ENCODE measurements at regions of chr2 and their contacts with region 1.

Region 1: GRCh38 chr2:197113275-197113711 is 186.8 kb upstream of the PGAP1 start:
- DNase-seq: no peak
- H3K4me3 ChIP-seq: no peak overlapping the region
- CTCF ChIP-seq: no peak

Region 2: DNA sequence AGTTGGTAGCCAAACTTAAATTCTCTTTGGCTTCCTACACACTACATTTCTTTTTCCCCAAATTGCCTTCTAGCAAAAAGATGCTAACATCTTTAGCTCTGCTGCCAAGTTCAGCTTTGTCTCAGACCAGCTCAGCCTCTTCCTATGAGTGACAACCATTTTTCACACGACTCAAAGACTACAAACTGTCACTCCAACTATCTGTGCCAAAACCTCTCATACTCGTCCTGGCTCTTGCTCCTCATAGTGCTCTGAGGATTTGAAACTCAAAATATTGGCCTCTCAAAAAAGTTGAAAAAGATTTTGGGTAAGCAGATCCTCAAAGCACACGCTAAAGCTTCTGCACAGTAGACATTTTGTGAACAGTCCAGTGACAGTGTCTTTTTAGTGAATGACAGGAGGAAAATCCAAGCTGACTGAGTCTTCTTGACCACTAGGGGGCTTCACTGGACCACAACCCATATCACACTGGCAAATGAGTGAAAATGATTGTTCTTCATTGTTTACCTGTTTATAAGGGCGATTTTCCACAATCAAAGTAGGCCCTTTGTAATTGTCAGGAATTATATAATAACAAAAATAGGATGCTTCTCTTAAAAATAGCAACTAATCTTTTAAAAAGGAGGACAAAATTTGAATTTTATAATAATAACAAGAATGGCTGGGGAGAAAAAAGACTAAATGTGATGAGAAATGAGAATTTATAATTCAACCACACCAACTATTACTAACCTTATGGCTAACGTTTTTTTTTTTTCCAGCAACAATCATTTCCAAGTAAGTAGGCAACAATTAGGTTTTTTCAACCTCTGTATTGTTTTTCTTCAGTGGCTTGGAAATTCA is 101.3 kb before region 1 on chr2:
- CTCF ChIA-PET with region 1: interaction called, 16 read pairs
- POLR2A ChIA-PET with region 1: no interaction called
- DNase-seq: no peak
- H3K4me3 ChIP-seq: no peak overlapping the region
- CTCF ChIP-seq: peak; percentile 80

Region 3: DNA sequence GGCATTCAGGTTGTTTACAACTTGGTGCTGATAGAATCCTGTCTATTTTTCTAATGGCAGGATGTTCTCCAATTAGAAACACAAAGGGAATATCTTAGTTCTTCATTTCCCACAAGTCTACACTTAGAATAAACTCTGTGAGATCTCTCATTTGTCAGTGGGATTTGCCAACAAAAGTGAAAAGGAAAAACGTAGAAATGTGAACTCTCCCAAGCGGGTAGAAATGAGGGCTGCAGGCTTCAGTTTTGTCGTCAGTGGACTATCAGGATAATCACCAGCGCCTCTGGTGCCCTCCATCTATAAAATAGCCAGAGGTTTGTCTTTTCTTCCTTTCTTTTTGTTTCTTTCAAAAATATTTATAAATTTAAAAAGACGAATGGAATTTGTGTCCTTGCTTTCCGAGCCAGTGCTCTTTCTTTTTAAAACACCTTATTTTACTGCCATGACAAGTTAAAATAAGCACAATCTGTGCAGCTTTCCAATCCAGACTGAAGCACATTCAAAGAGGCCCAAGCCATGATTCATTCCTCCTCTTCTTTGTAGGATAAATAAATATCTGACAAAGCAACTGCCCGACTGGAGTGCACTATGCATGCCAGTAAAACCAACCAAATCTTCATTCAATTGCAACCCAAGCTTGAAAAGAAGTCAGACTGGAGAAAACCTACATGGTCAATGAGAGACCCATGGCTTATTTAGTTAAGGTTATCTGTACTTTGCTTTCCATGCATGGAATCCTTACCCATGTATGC is 11.5 kb after region 1 on chr2:
- CTCF ChIA-PET with region 1: interaction called, 54 read pairs
- POLR2A ChIA-PET with region 1: no interaction called
- DNase-seq: peak; percentile 50
- H3K4me3 ChIP-seq: no peak overlapping the region
- CTCF ChIP-seq: no peak

Region 4: DNA sequence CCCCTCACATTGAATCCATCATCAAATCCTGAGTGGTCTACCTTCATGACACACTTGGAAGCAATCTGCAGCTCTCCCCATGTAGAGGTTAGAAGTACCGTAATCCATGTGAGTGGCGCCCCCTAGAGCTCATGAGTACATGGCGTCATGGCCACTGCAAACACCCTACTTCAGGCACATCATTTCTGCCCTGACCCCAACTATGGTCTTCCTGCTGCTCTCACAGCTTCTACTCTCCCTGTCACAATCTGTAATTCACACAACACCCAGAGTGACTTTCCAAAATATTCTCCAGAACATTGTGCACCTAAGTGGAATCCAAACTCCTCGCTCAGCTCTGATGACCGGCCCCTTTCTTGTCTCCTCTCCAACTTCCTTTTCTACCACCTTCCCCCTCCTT is 55.4 kb after region 1 on chr2:
- CTCF ChIA-PET with region 1: interaction called, 46 read pairs
- POLR2A ChIA-PET with region 1: no interaction called
- DNase-seq: no peak
- H3K4me3 ChIP-seq: no peak overlapping the region
- CTCF ChIP-seq: peak; percentile 59

Region 5: DNA sequence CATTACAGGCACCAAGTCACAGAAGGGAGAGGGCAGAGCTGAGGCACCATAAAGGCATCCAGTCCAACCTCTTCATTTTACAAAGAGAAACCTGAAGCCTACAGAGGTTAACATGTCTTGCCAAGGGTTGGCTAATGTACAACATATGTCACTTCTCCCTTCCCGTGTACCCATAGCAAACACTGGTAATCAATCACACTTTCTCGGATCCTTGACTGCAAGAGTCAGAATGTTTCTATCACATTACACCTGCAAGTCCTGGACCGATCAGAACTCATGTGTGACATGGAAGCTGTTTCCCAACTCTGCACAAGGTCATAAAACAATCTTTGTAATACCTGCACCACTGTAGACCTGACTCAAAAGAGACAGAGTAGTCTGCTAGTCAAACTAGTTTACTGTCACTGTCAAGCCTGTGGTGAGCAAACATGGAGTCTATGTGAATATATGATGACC is 191.3 kb after region 1 on chr2:
- CTCF ChIA-PET with region 1: interaction called, 14 read pairs
- POLR2A ChIA-PET with region 1: no interaction called
- DNase-seq: no peak
- H3K4me3 ChIP-seq: no peak overlapping the region
- CTCF ChIP-seq: no peak

Region 6: DNA sequence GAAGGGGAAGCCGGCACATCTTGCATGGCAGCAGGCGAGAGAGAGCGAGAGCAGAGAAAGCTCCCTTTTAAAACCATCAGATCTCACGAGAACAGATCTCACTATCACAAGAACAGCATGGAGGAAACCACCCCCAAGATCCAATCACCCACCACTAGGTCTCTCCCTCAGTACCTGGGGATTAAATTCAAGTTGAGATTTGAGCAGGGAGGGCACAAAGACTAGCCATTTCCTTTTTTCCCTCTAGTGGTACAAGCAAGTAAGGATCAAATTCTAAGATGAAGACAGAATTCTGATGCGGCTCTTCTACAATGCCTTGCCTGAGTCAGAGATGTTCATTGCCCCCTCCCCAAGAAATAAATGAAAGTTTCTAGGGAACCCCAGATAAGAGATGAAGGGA is 242.8 kb after region 1 on chr2:
- CTCF ChIA-PET with region 1: interaction called, 24 read pairs
- POLR2A ChIA-PET with region 1: no interaction called
- DNase-seq: no peak
- H3K4me3 ChIP-seq: no peak overlapping the region
- CTCF ChIP-seq: peak; percentile 16